ENCODE measurements at regions of chr2 and their contacts with region 1.

Region 1: DNA sequence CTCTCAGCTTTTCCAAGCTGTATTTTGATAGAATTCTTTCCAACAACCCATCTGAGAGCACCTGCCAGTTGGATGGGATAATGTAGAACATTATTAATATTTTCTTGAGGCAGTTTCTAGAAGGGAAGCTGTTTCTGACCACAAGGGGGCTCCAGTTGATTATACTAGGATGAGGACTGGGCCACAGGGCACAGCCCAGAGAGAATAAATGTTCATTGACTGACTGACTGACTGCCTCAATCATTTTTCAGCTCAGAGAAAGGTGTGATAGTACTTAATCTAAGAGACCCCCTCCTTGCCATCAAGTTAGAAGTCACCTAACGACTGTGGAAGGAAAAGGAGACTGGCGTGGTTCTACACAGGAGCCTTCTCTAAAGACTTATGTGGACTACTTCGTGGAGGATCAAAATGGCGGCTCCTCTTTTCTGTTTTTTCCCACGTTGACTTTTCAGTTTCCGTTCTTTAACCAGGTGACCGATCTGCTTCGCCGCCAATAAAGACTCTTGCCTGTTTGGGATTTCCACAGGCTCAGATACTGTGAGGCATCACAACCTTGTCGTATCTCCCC is 31.9 kb upstream of the CREG2 start:
- DNase-seq: peak in 8 of 9 donors; percentile 41 to 74 (median 68)
- ATAC-seq: peak; percentile 87
- H3K4me3 ChIP-seq: no peak overlapping the region
- H3K4me3 Mint-ChIP-seq: no peak overlapping the region
- H3K27ac ChIP-seq: no peak overlapping the region
- H3K27ac Mint-ChIP-seq: peak overlapping the region in 1 of 9 donors; percentile 64
- H3K4me1 ChIP-seq: no peaks in the 10 kb centered on the region
- H3K4me1 Mint-ChIP-seq: peaks cover 0 to 5% (median 0%) of the 10 kb centered on the region in 7 donors
- H3K27me3 ChIP-seq: no peaks in the 10 kb centered on the region
- H3K27me3 Mint-ChIP-seq: peaks cover 0 to 6% (median 0%) of the 10 kb centered on the region in 5 donors

Region 2: DNA sequence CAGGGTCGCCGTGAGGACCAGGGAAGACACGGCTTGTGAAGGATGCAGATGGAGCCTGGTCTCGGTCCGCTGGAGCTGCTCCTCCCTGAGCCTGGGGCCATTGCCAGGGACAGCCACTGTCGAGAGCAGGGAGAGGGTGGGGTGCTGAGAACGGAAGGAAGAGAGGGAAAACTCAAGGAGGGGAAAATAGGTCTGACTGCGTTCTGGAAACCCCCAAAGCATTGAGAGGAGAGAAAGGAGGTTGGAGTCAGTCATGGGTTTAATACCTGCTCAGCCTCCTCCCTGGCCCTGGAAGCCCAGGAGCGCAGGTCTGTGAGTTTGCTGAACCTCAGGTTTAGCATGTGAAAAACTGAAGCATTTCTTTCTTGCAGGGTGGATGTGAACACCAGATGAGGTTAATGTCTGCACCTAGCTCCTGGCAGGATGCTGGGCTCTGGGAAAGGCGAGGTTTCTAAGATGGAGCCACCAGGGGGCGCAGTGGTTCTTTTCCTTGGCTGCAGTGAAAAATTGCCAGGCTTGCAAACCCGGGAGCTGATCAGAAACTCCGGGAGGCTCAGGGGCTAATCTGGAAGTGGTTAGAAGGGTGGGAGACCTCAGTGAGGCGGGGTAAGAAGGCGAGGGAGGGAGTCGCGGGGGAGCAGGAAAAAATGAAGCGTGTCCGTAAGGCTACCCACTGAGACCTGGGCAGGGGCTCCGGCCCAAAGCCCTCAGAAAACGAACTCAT is 77.1 kb before region 1 on chr2:
- CTCF ChIA-PET with region 1: interaction called, 5 read pairs
- POLR2A ChIA-PET with region 1: no interaction called
- intact Hi-C with region 1: loop called (anchors 2 to 5 kb)
- DNase-seq: peak; percentile 32 to 73 (median 51)
- ATAC-seq: peak; percentile 76
- H3K4me3 ChIP-seq: no peak overlapping the region
- H3K4me3 Mint-ChIP-seq: peak overlapping the region in 4 of 10 donors; percentile 10 to 63 (median 18)
- H3K27ac ChIP-seq: no peak overlapping the region
- H3K27ac Mint-ChIP-seq: peak overlapping the region in 5 of 9 donors; percentile 9 to 68 (median 31)
- H3K4me1 ChIP-seq: peaks cover 6 to 21% of the 10 kb centered on the region in 2 donors
- H3K4me1 Mint-ChIP-seq: peaks cover 24 to 43% (median 32%) of the 10 kb centered on the region in 7 donors
- H3K27me3 ChIP-seq: no peaks in the 10 kb centered on the region
- H3K27me3 Mint-ChIP-seq: peaks cover 0 to 20% (median 0%) of the 10 kb centered on the region in 5 donors

Region 3: GRCh38 chr2:101597351-101597944 is 178.3 kb after region 1 on chr2:
- CTCF ChIA-PET with region 1: no interaction called
- POLR2A ChIA-PET with region 1: no interaction called
- intact Hi-C with region 1: no loop called
- DNase-seq: no peak
- ATAC-seq: no peak
- H3K4me3 ChIP-seq: no peak overlapping the region
- H3K4me3 Mint-ChIP-seq: no peak overlapping the region
- H3K27ac ChIP-seq: no peak overlapping the region
- H3K27ac Mint-ChIP-seq: peak overlapping the region in 1 of 9 donors; percentile 14
- H3K4me1 ChIP-seq: peaks cover 0 to 5% of the 10 kb centered on the region in 2 donors
- H3K4me1 Mint-ChIP-seq: peaks cover 3 to 28% (median 20%) of the 10 kb centered on the region in 7 donors
- H3K27me3 ChIP-seq: no peaks in the 10 kb centered on the region
- H3K27me3 Mint-ChIP-seq: no peaks in the 10 kb centered on the region

Region 4: GRCh38 chr2:101655702-101656422 is 236.7 kb after region 1 on chr2:
- CTCF ChIA-PET with region 1: no interaction called
- POLR2A ChIA-PET with region 1: no interaction called
- intact Hi-C with region 1: loop called in 1 of 2 experiments (anchors 10 kb)
- DNase-seq: no peak
- ATAC-seq: no peak
- H3K4me3 ChIP-seq: no peak overlapping the region
- H3K4me3 Mint-ChIP-seq: no peak overlapping the region
- H3K27ac ChIP-seq: no peak overlapping the region
- H3K27ac Mint-ChIP-seq: no peak overlapping the region
- H3K4me1 ChIP-seq: peaks cover 5 to 10% of the 10 kb centered on the region in 2 donors
- H3K4me1 Mint-ChIP-seq: peaks cover 11 to 25% (median 16%) of the 10 kb centered on the region in 7 donors
- H3K27me3 ChIP-seq: no peaks in the 10 kb centered on the region
- H3K27me3 Mint-ChIP-seq: no peaks in the 10 kb centered on the region

Region 5: DNA sequence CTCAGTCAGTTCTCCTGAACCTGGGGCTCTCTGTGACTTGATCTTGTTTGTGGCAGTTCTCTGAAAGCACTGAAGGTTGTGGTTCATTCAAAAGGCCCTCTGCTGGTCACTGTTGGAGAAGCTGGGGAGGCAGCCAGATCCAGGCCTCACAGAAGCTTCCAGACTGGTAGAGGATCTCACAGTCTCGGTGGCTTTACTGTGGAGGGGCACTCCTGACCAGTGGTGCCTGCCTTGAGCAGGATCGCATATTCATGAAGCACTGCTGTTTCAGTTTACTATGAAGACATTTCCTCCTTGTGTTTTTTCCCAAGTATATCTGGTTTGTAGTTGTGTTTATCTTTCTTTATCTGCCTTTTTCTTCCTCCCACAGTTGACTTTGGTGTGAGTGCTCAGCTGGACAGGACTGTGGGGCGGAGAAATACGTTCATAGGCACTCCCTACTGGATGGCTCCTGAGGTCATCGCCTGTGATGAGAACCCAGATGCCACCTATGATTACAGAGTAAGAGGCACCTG is 412.2 kb after region 1 on chr2:
- CTCF ChIA-PET with region 1: interaction called, 84 read pairs
- POLR2A ChIA-PET with region 1: no interaction called
- intact Hi-C with region 1: loop called (anchors 1 kb)
- DNase-seq: peak; percentile 17 to 68 (median 62)
- ATAC-seq: peak; percentile 76
- H3K4me3 ChIP-seq: no peak overlapping the region
- H3K4me3 Mint-ChIP-seq: peak overlapping the region in 8 of 10 donors; percentile 12 to 77 (median 60)
- H3K27ac ChIP-seq: no peak overlapping the region
- H3K27ac Mint-ChIP-seq: peak overlapping the region in 8 of 9 donors; percentile 7 to 88 (median 72)
- H3K4me1 ChIP-seq: peaks cover 13 to 44% of the 10 kb centered on the region in 2 donors
- H3K4me1 Mint-ChIP-seq: peaks cover 45 to 56% (median 54%) of the 10 kb centered on the region in 7 donors
- H3K27me3 ChIP-seq: no peaks in the 10 kb centered on the region
- H3K27me3 Mint-ChIP-seq: no peaks in the 10 kb centered on the region